CD14-positive monocyte (primary cell): ENCODE measurements at regions of chrX and their contacts with region 1.

Region 1: GRCh38 chrX:154097597-154098541 is at the start of gene MECP2:
- DNase-seq: peak; percentile 86 to 90 (median 89)
- H3K4me3 ChIP-seq: peak within 1 kb of the TSS; percentile 52 to 87 (median 54)
- H3K4me3 Mint-ChIP-seq: peak within 1 kb of the TSS; percentile 90 to 93
- H3K27ac ChIP-seq: peak within 1 kb of the TSS; percentile 61 to 78
- H3K27ac Mint-ChIP-seq: peak within 1 kb of the TSS; percentile 79 to 95 (median 91)
- H3K4me1 ChIP-seq: peaks cover 31 to 36% of the 10 kb centered on the region in 2 donors
- H3K4me1 Mint-ChIP-seq: peaks cover 32% of the 10 kb centered on the region
- H3K27me3 ChIP-seq: peaks cover 0 to 15% of the 10 kb centered on the region in 2 donors
- H3K27me3 Mint-ChIP-seq: peaks cover 0 to 21% (median 2%) of the 10 kb centered on the region in 3 donors
- CTCF ChIP-seq: no peak
- polyA plus RNA-seq, gene MECP2: 5.2 to 21.2 (median 9.6) TPM

Region 2: DNA sequence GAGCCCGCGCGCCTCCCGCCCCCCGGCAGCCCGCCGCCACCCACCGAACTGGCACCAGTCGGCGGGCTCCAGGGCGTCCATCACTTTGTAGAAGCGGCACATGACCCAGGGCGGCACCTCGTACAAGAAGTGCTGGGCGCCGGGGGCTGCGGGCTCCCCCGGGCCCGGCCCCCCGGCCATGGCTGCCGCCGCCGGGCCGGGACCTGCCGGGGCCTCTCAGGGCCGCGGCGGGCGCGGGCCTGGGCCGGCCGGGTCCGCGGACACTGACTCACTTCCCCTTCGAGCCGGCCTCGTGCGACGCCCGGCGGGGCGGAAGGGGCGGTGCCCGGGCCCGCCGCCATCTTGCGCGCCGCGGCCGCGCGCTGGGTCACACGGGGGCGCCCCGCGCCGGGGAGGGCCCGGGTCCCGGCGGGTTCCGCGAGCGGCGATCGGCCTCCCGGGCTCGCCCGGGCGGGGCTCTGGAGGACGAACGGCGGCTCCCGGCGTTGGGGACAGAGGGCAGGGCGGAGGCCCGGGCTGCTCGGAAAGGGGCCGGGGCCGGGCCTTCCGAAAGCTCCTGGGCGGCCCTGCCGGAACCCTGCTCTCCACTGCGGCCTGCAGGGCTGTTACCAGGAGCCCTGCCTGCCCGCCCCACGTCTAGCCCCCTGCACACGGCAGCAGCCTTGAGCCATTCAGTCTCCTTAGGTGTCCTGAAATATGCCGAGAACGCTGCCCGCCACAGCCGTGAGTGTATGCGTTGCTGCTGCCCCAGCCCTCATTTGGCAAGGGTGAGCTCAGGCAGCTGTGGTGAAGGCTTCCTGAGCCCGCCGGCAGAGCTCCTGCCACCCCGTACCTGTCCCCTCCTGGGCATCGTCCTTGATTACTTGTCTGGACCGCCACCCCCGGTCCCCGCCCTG is 78.0 kb before region 1 on chrX and contains the start of gene IRAK1:
- intact Hi-C with region 1: loop called in 1 of 2 experiments (anchors 10 kb)
- DNase-seq: peak; percentile 63 to 78 (median 63)
- H3K4me3 ChIP-seq: peak within 1 kb of the TSS; percentile 61 to 79 (median 69)
- H3K4me3 Mint-ChIP-seq: peak within 1 kb of the TSS; percentile 92 to 94
- H3K27ac ChIP-seq: peak within 1 kb of the TSS; percentile 97 to 99
- H3K27ac Mint-ChIP-seq: peak within 1 kb of the TSS; percentile 95 to 99 (median 98)
- H3K4me1 ChIP-seq: peaks cover 28 to 33% of the 10 kb centered on the region in 2 donors
- H3K4me1 Mint-ChIP-seq: peaks cover 32% of the 10 kb centered on the region
- H3K27me3 ChIP-seq: peaks cover 0 to 2% of the 10 kb centered on the region in 2 donors
- H3K27me3 Mint-ChIP-seq: peaks cover 0 to 48% (median 0%) of the 10 kb centered on the region in 3 donors
- CTCF ChIP-seq: no peak
- polyA plus RNA-seq, gene IRAK1: 47.8 to 109 (median 49.5) TPM

Region 3: DNA sequence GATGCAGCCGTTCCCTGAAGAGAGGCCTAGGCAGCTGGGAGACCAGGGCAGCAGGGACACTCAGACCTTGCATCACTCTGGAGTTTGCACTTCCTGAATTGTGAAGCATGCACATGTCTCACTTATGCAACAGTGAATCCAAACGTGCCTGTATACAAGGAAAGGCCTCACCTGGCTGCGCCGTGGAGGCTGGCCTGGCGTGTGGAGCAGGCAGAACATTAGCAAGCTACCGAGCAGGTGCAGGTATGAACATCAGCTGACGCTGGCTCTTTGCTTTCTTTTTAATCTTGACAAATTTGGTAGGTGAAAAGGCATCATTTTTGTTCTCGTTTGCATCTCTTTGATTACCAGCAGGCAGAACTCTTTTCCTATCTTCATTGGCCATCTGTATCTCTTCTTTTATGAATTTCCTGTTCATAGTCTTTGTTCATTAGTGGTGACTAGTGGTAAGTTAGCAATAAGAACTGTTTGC is 41.1 kb before region 1 on chrX:
- intact Hi-C with region 1: loop called in 1 of 2 experiments (anchors 5 kb)
- DNase-seq: peak; percentile 63 to 84 (median 77)
- H3K4me3 ChIP-seq: no peak overlapping the region
- H3K4me3 Mint-ChIP-seq: no peak overlapping the region
- H3K27ac ChIP-seq: peak overlapping the region in 1 of 2 donors; percentile 49
- H3K27ac Mint-ChIP-seq: peak overlapping the region in 6 of 7 donors; percentile 55 to 88 (median 67)
- H3K4me1 ChIP-seq: peaks cover 8 to 20% of the 10 kb centered on the region in 2 donors
- H3K4me1 Mint-ChIP-seq: peaks cover 40% of the 10 kb centered on the region
- H3K27me3 ChIP-seq: peaks cover 0 to 30% of the 10 kb centered on the region in 2 donors
- H3K27me3 Mint-ChIP-seq: peaks cover 0 to 29% (median 0%) of the 10 kb centered on the region in 3 donors
- CTCF ChIP-seq: no peak